ENCODE measurements at regions of chr19 and their contacts with region 1.

Region 1: DNA sequence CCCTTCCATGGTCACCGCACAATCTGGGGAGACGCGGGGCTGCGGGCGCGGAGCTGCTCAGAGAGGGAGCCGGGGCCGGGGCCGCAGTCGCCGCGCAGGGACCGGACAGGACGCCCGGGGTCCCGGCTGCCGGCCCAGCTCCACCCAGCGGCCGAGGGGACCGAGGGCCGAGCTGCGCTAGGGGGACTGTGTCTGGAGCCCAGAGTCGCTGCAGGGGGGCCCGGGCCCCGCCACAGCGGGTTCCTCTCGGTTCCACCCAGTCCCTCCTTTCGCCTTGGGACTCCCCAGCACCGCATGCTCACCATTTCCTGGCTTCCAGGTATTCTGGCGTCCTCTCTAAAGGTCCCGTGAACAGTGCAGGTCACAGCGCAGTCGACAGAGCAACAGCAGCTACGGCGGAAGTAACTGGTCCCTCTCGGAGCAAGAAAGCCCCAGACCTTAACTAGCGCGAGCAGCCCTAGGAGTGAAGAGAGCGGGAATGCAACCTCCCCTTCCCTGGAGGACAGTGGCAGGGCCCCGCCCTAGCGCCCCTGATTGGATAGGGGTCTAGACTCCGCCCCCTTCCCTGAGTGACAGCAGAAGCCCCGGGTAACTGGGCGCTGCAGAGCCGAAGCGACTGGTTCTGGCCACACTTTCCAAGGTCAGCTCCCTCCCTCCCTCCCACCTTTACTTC is at the start of gene ZNF878:
- DNase-seq: peak; percentile 95
- ATAC-seq: peak; percentile 100
- total RNA-seq, gene ZNF878: 0.32 TPM

Region 2: DNA sequence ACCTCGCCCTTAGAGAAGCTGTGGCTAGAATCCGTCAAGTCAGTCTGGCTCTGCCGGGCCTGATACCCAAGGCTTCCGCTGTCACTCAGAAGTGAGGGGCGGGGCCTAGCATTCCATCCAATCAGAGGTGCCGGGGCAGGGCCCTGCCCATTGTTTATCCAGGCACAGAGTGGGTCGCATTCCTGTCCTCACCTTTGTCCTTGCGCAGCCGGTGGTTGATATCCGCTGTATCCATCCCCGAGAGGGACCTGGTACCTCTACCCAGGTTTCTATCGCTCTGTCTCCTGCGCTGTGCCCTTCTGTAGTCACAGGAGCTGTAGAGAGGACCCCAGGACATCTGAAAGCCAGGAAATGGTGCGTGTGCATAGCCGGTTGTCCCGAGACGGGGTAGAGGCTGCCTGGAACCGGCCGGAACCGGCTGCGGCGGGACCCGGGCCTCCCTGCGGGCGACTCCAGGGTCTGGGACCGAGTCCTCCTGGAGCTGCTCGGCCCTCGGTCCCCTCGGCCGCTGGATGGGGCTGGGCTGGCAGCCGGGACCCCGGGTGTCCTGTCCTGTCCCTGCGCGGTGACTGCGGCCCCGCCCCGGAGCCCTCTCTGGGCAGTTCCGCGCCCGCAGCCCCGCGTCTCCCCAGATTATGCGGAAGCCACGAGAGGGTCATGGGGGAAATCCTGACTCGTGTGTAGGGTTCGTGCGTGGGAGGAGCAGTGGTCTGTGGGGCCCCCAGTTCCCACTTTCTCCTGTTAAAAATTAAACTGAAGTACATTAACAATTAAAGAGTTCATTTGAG is 87.6 kb before region 1 on chr19 and contains the start of gene ZNF763:
- intact Hi-C with region 1: loop called (anchors 10 kb)
- DNase-seq: peak; percentile 96
- ATAC-seq: peak; percentile 99
- total RNA-seq, gene ZNF763: 2.6 TPM